CD4-positive, alpha-beta T cell (primary cell): ENCODE measurements at regions of chr17 and their contacts with region 1.

Region 1: GRCh38 chr17:17940451-17940911 is 31.7 kb downstream of the TOM1L2 start:
- DNase-seq: no peak
- ATAC-seq: no peak
- H3K4me3 ChIP-seq: no peak overlapping the region
- H3K4me3 Mint-ChIP-seq: no peak overlapping the region
- H3K27ac ChIP-seq: no peak overlapping the region
- H3K27ac Mint-ChIP-seq: no peak overlapping the region
- H3K4me1 ChIP-seq: peaks cover 25% of the 10 kb centered on the region
- H3K4me1 Mint-ChIP-seq: peaks cover 47% of the 10 kb centered on the region
- H3K27me3 ChIP-seq: no peaks in the 10 kb centered on the region
- H3K27me3 Mint-ChIP-seq: no peaks in the 10 kb centered on the region
- CTCF ChIP-seq: no peak

Region 2: GRCh38 chr17:18009609-18010420 is 69.3 kb after region 1 on chr17:
- CTCF ChIA-PET with region 1: no interaction called
- POLR2A ChIA-PET with region 1: no interaction called
- intact Hi-C with region 1: loop called in 1 of 2 experiments (anchors 5 kb)
- DNase-seq: no peak
- ATAC-seq: no peak
- H3K4me3 ChIP-seq: no peak overlapping the region
- H3K4me3 Mint-ChIP-seq: no peak overlapping the region
- H3K27ac ChIP-seq: no peak overlapping the region
- H3K27ac Mint-ChIP-seq: no peak overlapping the region
- H3K4me1 ChIP-seq: no peaks in the 10 kb centered on the region
- H3K4me1 Mint-ChIP-seq: no peaks in the 10 kb centered on the region
- H3K27me3 ChIP-seq: no peaks in the 10 kb centered on the region
- H3K27me3 Mint-ChIP-seq: no peaks in the 10 kb centered on the region
- CTCF ChIP-seq: no peak